Lower lobe of right lung (tissue), 2 donors: ENCODE measurements at regions of chr19 and their contacts with region 1.

Region 1: DNA sequence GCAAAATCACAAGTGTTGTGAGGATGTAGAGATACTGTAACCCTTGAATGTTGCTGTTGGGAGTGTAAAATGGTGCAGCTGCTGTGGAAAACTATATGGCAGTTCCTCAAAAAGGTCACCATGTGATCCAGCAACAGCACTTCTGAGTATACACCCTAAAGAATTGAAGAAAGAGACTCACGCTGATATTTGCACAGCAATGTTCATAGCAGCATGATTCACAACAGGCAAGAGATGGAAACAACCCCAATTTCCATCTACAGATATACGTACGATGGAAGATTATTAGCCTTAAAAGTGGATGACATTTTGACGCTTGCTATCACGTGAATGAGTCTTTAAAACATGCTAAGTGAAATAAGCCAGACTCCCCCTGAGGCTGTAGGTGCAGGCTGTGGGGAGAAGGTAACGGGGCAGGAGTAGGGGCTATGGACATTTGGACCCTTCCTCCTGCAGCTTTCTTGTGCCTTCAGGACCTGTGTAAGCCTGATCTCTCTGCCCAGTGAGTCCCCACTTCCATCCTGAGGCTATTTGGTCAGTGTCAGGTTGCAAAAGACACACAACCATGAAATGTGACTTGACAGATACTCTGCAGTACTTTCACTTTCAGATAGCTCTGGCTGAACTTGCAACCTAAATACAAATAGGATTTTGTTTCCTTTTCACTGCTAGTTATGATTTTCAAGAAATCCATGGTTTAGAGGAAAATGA is 17.6 kb upstream of the EID2 start:
- DNase-seq: no peak
- ATAC-seq: peak; percentile 66 to 81
- H3K4me3 ChIP-seq: no peak overlapping the region
- H3K27ac ChIP-seq: peak overlapping the region; percentile 22
- H3K4me1 ChIP-seq: peaks cover 15% of the 10 kb centered on the region
- H3K27me3 ChIP-seq: no peaks in the 10 kb centered on the region
- CTCF ChIP-seq: no peak

Region 2: DNA sequence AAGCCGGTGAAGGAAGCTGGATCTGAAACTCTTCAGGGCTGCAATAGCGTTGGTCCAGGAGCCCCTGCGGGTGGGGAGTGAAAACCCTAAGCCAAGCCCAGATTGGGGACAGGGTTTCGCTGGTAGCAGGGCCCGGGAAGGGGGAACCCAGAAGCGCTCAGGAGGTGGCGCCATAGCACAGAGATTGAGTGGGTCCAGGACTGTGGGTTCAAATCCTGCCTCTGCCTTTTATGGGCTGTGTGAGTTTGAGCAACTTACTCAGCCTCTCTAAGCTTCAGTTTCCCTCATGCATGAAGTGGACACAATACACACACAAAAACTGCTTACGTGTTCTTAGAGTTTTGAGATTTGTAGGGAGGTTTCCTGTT is 345.2 kb before region 1 on chr19:
- intact Hi-C with region 1: no loop called
- DNase-seq: peak; percentile 60
- ATAC-seq: peak; percentile 73 to 82
- H3K4me3 ChIP-seq: no peak overlapping the region
- H3K27ac ChIP-seq: no peak overlapping the region
- H3K4me1 ChIP-seq: no peaks in the 10 kb centered on the region
- H3K27me3 ChIP-seq: peaks cover 8% of the 10 kb centered on the region
- CTCF ChIP-seq: peak; percentile 49

Region 3: DNA sequence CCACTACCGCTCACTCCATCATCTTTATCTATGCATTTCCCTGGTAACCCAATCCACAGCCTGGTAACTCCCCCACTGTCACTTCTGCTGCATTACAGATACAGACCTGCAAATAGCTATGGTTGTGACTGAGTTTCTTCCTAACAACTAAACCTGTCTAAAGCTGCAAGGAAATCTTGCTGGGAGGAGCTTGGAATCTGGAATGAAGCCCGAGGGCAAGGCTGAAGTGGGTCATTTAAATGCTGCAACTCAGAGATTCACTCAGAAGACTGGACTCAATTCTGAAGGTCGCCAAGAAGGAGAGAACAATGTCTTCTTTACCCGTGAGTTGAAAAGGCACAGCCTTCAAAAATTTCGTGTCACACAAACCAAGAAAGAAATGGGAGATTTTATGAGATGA is 44.7 kb after region 1 on chr19 and contains the start of gene LGALS13:
- intact Hi-C with region 1: no loop called
- DNase-seq: no peak
- ATAC-seq: no peak
- H3K4me3 ChIP-seq: no peak within 1 kb of the TSS
- H3K27ac ChIP-seq: no peak within 1 kb of the TSS
- H3K4me1 ChIP-seq: no peaks in the 10 kb centered on the region
- H3K27me3 ChIP-seq: peaks cover 10% of the 10 kb centered on the region
- CTCF ChIP-seq: no peak
- total RNA-seq, gene LGALS13: not detected

Region 4: DNA sequence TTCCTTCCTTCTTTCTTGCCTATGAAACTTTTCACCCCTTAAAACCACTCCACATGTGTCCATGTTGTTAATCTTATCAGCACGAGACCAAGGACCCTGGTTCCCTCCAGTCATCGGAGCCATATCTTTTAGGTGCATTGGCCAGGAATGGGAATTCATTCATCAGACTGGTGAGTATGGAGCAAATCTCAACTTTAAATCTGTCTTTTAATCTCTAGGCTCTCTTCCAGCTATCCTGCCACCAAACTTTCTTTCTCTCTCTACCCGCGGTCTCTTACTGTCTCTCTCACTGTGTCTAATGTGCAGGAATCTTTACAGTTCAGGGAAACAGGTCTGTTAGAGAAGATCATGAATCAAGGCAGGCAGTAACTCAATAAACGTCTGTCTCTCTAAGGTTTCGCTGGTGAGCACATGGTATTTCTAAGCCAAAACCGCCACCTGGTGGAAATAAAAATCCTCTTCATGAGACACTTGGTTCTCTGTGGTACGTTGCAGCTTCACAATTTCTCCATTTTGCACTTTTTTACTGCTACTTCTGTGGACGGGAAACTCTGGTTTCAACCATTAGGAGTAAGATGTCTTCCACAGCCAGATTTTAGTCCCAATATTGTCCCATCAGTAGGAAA is 114.3 kb after region 1 on chr19:
- intact Hi-C with region 1: loop called (anchors 10 kb)
- DNase-seq: no peak
- ATAC-seq: peak; percentile 50 to 80
- H3K4me3 ChIP-seq: no peak overlapping the region
- H3K27ac ChIP-seq: no peak overlapping the region
- H3K4me1 ChIP-seq: no peaks in the 10 kb centered on the region
- H3K27me3 ChIP-seq: no peaks in the 10 kb centered on the region
- CTCF ChIP-seq: peak; percentile 57